Colonic mucosa (tissue), 4 donors: ENCODE measurements at regions of chr1 and their contacts with region 1.

Region 1: DNA sequence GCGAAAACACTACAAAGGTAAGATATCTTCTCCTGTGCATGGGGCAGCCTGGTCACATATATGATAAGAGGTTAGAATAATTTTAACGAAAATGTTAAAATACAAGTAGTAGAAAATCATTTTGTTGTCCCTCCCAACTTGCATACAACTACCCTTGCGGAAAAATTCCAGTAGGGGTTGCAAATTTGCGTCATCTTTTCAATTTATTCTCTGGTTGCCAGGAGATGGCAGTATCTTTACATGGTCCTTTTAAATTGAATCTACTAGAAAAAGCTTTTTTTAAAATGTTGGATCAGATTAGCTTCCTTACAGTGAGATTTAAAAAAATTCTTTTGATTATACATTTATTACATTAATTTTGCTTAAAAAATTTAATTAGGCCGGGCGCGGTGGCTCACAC is 10.9 kb downstream of the S100PBP start:
- DNase-seq: no peak
- H3K4me3 ChIP-seq: no peak overlapping the region
- H3K27ac ChIP-seq: no peak overlapping the region
- H3K4me1 ChIP-seq: no peaks in the 10 kb centered on the region
- H3K27me3 ChIP-seq: no peaks in the 10 kb centered on the region
- CTCF ChIP-seq: no peak

Region 2: GRCh38 chr1:32876341-32877210 is 48.2 kb after region 1 on chr1:
- intact Hi-C with region 1: loop called (anchors 10 kb)
- DNase-seq: peak; percentile 68
- H3K4me3 ChIP-seq: no peak overlapping the region
- H3K27ac ChIP-seq: no peak overlapping the region
- H3K4me1 ChIP-seq: no peaks in the 10 kb centered on the region
- H3K27me3 ChIP-seq: peaks cover 9% of the 10 kb centered on the region
- CTCF ChIP-seq: peak; percentile 91

Region 3: GRCh38 chr1:33342041-33342723 is 513.8 kb after region 1 on chr1:
- intact Hi-C with region 1: no loop called
- DNase-seq: peak; percentile 88
- H3K4me3 ChIP-seq: no peak overlapping the region
- H3K27ac ChIP-seq: peak overlapping the region; percentile 80
- H3K4me1 ChIP-seq: peaks cover 27% of the 10 kb centered on the region
- H3K27me3 ChIP-seq: no peaks in the 10 kb centered on the region
- CTCF ChIP-seq: no peak